ENCODE measurements at regions of chr18 and their contacts with region 1.

Region 1: DNA sequence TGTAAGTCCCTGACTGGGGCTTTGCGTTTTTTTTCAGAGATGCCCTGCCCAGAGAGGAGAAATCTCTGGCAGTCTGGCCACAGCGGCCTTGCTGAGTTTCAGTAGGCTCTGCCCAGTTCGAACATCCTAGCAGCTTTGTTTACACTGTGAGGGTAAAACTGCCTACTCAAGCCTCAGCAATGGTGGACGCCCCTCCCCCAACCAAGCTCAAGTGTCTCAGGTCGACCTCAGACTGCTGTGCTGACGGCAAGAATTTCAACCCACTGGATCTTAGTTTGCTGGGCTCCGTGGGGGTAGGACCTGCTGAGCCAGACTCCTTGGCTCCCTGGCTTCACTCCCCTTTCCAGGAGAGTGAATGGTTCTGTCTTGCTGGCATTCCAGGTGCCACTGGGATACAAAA is 31.7 kb downstream of the L3MBTL4 start:
- DNase-seq: no peak
- ATAC-seq: no peak
- H3K4me3 ChIP-seq: no peak overlapping the region
- H3K27ac ChIP-seq: no peak overlapping the region
- H3K4me1 ChIP-seq: no peaks in the 10 kb centered on the region
- H3K27me3 ChIP-seq: no peaks in the 10 kb centered on the region
- CTCF ChIP-seq: no peak

Region 2: GRCh38 chr18:6219116-6219717 is 163.7 kb before region 1 on chr18:
- intact Hi-C with region 1: no loop called
- DNase-seq: no peak
- ATAC-seq: no peak
- H3K4me3 ChIP-seq: no peak overlapping the region
- H3K27ac ChIP-seq: no peak overlapping the region
- H3K4me1 ChIP-seq: no peaks in the 10 kb centered on the region
- H3K27me3 ChIP-seq: no peaks in the 10 kb centered on the region
- CTCF ChIP-seq: peak; percentile 29

Region 3: GRCh38 chr18:6327895-6328620 is 54.9 kb before region 1 on chr18:
- intact Hi-C with region 1: loop called in 1 of 2 experiments (anchors 10 kb)
- DNase-seq: no peak
- ATAC-seq: no peak
- H3K4me3 ChIP-seq: no peak overlapping the region
- H3K27ac ChIP-seq: no peak overlapping the region
- H3K4me1 ChIP-seq: no peaks in the 10 kb centered on the region
- H3K27me3 ChIP-seq: no peaks in the 10 kb centered on the region
- CTCF ChIP-seq: no peak

Measured in psoas muscle (tissue), 8 donors.